ENCODE measurements at regions of chr5 and their contacts with region 1.

Region 1: DNA sequence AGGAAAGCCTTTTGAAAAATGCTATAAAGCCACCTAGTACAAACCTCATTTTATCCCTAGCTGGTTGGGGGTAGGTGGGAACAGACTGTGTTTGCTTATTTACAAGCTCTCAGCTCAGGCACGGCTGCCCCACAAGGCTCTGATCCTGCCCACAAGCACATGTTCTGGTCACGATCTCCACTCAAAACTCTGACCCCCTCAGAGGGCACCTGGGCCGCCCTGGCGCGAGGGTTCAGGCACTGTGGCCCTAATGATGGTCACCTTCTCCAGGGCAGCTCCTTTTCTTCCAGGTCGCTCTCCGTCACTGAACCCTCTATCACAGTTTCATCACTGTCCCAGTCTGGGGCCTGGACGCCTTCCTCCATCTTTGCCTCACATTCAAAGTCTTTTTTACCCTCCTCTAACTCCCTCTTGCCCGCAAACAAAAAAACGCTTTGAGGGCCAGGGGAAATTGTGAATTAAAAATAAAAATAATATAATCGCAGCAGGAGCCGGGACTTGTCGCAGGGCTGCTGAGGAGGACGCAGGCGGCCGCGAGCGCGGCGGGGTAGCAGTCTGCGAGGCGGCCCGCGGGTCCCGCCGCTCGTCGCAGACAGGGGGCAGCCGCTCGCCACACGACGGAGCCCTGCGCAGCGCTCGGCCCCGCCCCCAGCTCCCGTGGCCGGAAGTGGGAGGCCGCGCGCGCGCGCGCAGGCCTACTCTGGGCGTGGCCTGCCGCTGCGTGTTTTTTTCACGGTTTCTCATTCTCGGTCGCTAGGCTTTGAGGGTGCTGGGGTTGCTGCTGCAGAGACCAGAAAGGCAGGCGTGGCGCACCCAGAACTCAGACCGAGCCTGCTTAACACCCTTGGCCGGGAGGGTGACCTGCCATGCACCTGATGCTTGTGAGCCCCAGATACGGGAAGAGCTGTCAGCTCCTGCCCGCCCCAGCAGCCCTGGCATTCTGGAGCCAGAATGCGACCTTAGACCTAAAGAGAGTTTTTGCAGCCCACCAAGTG is at the start of gene ANKRD31:
- DNase-seq: peak; percentile 72 to 91 (median 80)
- H3K4me3 ChIP-seq: peak within 1 kb of the TSS; percentile 63 to 96 (median 76)
- H3K27ac ChIP-seq: peak within 1 kb of the TSS; percentile 51 to 95 (median 86)
- H3K27me3 ChIP-seq: no peaks in the 10 kb centered on the region
- CTCF ChIP-seq: peak; percentile 70 to 99 (median 92)
- total RNA-seq, gene ANKRD31: 0.32 to 1.7 (median 0.93) TPM

Region 2: DNA sequence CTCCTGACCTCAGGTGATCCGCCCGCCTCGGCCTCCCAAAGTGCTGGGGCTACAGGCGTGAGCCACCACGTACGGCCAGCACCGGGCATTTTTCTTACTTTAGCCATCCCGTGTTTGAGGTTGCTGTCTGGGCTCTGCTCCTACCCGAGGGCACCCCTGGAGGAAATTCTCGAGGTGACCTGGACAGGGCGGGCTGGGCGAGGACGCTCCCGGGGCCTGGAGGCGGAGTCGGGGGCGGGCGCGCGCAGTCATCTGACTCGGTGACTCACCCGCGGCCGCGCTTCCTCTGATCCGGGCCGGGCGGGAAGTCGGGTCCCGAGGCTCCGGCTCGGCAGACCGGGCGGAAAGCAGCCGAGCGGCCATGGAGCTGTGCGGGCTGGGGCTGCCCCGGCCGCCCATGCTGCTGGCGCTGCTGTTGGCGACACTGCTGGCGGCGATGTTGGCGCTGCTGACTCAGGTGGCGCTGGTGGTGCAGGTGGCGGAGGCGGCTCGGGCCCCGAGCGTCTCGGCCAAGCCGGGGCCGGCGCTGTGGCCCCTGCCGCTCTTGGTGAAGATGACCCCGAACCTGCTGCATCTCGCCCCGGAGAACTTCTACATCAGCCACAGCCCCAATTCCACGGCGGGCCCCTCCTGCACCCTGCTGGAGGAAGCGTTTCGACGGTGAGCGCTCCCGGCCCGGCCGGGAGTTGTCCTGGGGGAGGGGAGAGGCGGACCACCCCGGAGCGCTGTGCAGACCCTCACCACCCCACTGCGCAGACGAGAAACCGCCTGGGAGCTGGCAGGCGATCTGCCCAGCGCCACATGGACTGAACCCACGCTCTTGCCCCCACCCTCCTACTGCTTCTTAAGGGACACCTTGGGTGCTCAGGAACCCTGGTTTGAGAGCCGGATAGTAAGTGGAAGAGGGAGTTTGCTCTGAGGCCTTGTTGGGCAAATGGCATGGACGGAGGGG is 551.4 kb before region 1 on chr5 and contains the start of gene HEXB:
- intact Hi-C with region 1: loop called in 1 of 2 experiments (anchors 10 kb)
- DNase-seq: peak; percentile 72 to 93 (median 84)
- H3K4me3 ChIP-seq: peak within 1 kb of the TSS; percentile 64 to 98 (median 88)
- H3K27ac ChIP-seq: peak within 1 kb of the TSS; percentile 9 to 97 (median 86)
- H3K27me3 ChIP-seq: no peaks in the 10 kb centered on the region
- CTCF ChIP-seq: peak in 24 of 56 donors; percentile 4 to 47 (median 22)
- total RNA-seq, gene HEXB: 30.9 to 75.5 (median 53.2) TPM

Region 3: DNA sequence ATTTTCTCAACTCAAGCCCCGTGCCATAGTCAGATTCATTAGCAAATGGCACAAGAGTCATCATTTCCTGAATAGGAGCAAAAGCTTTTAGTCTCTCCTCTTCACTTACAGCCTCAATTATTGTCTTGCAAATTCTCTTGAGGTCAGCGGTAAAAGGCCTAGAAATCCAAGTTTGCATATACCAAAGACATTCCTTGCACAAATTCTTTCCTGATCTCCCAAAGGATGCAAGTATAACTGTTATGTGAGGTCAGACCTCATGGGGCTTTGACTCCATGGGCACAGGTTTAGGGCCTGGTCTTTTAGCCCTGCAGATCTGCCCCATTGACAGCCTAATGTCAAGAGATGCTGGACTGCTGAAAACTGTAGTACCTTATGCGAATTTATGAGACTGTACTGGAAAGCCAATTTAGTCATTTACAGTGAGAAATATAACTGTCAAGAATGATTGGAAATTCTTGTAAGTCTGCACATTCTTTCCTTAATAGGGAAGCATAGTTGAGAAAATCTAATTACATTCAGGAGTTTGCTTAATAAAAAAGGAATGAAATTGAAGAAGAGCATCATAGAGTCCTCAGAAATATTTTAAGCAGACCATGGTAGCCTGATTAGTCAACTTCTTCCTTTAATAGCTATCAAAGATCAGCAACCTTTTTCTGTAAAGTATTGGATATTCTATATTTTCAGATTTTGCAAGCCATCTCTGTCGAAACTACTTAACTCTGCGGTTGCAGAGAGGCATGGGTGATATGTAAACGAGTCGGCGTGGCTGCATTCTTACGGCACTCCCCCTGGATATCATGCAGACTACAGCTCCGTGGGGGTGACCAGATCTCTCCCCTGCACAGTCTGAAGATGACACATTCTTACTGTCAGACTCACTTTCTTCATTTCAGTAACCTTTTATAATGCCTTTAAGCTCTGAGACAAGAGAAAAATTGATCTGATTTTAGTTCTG is 229.5 kb before region 1 on chr5:
- intact Hi-C with region 1: no loop called
- DNase-seq: no peak
- H3K4me3 ChIP-seq: no peak overlapping the region
- H3K27ac ChIP-seq: no peak overlapping the region
- H3K27me3 ChIP-seq: no peaks in the 10 kb centered on the region
- CTCF ChIP-seq: no peak

Region 4: GRCh38 chr5:75053304-75054133 is 183.1 kb before region 1 on chr5:
- intact Hi-C with region 1: loop called (anchors 2 to 5 kb)
- DNase-seq: peak in 5 of 10 donors; percentile 44 to 65 (median 57)
- H3K4me3 ChIP-seq: peak overlapping the region; percentile 46 to 95 (median 80)
- H3K27ac ChIP-seq: peak overlapping the region in 58 of 59 donors; percentile 15 to 95 (median 86)
- H3K27me3 ChIP-seq: no peaks in the 10 kb centered on the region
- CTCF ChIP-seq: peak in 12 of 56 donors; percentile 8 to 42 (median 22)

Region 5: DNA sequence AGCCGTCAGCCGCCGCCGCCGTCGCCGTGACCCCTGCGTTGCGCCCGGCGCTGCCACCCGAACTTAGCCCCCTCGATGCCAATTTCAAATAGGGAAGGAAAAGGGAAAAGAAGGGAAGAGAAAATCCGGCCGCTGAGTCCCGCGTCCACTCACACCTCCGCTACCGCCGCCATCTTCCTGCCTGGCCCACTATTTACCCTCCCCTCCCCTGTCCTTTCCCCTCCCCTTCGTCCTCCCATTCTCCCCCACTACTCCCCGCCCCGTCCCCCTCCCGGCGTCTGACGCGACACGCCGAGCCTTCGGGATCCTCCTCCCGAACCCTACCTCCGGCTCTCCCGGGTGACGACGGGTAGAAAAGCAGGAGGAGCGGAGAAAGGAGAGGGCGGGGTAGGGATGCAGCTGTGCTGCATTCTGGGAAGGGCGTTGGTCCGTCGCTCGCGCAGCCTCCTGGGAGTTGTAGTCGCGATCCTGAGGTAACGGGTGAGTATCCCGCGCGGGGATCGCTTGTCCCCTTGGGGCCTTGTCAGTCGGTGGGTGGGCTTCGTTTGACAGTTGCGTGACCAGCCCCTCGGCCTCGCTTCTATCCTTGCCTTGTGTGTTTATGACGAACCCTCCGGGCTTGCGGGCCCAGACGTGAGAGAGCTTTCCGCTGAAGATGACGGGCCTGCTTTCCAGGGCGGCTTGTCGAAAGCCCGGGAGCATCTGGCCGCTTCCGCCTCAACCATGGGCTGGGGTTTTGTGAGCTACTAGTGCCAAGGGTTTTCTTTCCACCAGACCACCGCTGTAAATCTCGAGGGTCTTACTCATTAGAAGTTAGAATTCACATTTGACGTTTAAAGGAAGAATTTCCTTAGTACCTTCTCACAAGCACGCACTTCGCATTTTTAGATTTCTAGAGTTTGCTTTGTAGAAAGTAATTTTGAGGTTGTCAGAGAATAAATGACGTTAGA is 275.1 kb after region 1 on chr5 and contains the starts of genes CERT1 and POLK:
- intact Hi-C with region 1: loop called in 1 of 2 experiments (anchors 5 kb)
- DNase-seq: peak; percentile 95 to 100 (median 98)
- H3K4me3 ChIP-seq: peak within 1 kb of the TSS; percentile 67 to 98 (median 88)
- H3K27ac ChIP-seq: peak within 1 kb of the TSS; percentile 82 to 99 (median 96)
- H3K27me3 ChIP-seq: no peaks in the 10 kb centered on the region
- CTCF ChIP-seq: peak in 18 of 56 donors; percentile 6 to 47 (median 24)
- total RNA-seq, gene CERT1: 37.0 to 86.0 (median 61.1) TPM
- total RNA-seq, gene POLK: 30.3 to 55.8 (median 41.3) TPM

Region 6: GRCh38 chr5:75681125-75681830 is 444.7 kb after region 1 on chr5:
- intact Hi-C with region 1: loop called in 1 of 2 experiments (anchors 5 kb)
- DNase-seq: no peak
- H3K4me3 ChIP-seq: peak overlapping the region in 10 of 59 donors; percentile 2 to 35 (median 14)
- H3K27ac ChIP-seq: peak overlapping the region in 15 of 59 donors; percentile 6 to 60 (median 26)
- H3K27me3 ChIP-seq: no peaks in the 10 kb centered on the region
- CTCF ChIP-seq: peak; percentile 65 to 91 (median 85)

Measured in dorsolateral prefrontal cortex (tissue), 120 donors.